HepG2 (cell line): ENCODE measurements at regions of chr7 and their contacts with region 1.

Region 1: DNA sequence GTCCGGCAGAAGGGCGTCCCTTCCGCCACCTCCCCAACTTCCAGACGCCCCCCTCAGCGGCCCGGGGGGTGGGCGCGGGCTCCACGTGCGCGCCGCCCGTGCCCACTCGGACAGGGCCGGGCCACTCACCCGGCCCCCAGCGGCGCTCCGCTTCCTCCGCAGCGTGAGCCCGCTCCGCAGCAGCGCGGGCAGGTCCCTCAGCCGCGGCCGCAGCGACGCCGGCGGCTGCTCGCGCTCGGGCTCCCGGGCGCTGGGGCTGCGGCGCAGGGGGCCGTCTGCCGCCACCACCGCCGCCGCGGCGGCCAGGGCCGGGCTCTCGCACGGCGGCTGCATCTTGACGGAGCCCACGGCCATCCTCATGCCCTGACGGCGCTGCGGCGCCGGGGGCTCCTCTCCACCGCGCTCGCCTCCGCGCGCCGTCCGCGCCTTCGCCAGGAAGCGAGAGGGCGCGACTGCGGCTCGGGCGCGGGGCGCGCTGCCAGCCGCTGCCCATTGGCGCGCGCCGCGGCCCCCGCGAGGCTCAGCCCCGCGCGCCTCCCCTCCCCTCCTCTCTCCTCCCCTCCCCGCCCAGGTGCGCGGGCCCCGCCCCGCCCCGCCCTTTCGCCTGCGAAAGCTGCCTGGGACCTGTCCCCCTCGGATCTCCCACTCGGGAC is at the start of gene RAPGEF5:
- DNase-seq: no peak
- ATAC-seq: peak; percentile 44
- H3K4me3 ChIP-seq: peak within 1 kb of the TSS; percentile 85 to 93 (median 88)
- H3K27ac ChIP-seq: peak within 1 kb of the TSS; percentile 95
- H3K4me1 ChIP-seq: peaks cover 85% of the 10 kb centered on the region
- H3K27me3 ChIP-seq: peaks cover 0 to 3% of the 10 kb centered on the region in 2 experiments; a peak in 1 of 5 replicates
- CTCF ChIP-seq: no peak
- EP300 ChIP-seq: no peak
- POLR2A ChIP-seq: peak in 1 of 2 experiments; percentile 54; a peak in 2 of 4 replicates
- RAD21 ChIP-seq: peak; percentile 43; the same call in 1 of the 2 replicates
- total RNA-seq, gene RAPGEF5: 14.2 and 23.4 TPM in 2 replicates

Region 2: GRCh38 chr7:22339725-22340390 is 17.0 kb before region 1 on chr7:
- CTCF ChIA-PET with region 1: no interaction called
- POLR2A ChIA-PET with region 1: interaction called, 17 read pairs
- in situ Hi-C with region 1: no loop called
- intact Hi-C with region 1: no loop called
- DNase-seq: no peak
- ATAC-seq: no peak
- H3K4me3 ChIP-seq: no peak overlapping the region
- H3K27ac ChIP-seq: no peak overlapping the region
- H3K4me1 ChIP-seq: peaks cover 93% of the 10 kb centered on the region
- H3K27me3 ChIP-seq: no peaks in the 10 kb centered on the region
- CTCF ChIP-seq: no peak
- EP300 ChIP-seq: no peak
- POLR2A ChIP-seq: no peak
- RAD21 ChIP-seq: no peak

Region 3: DNA sequence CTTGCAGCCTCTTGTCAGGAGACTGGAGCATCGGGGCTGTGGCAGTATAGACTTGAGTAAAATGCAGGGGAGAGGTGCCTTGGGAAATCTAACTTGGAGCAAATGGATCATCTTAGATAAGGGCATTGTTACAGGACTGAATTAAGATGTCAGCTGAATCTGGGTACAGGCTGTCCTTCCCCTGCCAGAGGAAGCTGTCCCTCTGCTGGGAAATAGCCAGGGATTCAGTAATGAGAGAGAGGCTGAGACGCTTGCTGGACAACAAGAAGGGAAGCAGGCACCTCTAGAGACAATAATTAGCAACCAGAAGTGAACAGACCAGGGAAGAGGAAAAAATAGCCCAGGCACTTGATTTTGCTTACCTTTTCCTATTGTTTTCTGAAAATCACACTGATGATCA is 20.9 kb after region 1 on chr7:
- CTCF ChIA-PET with region 1: no interaction called
- POLR2A ChIA-PET with region 1: interaction called, 26 read pairs
- in situ Hi-C with region 1: no loop called
- intact Hi-C with region 1: loop called (anchors 1 kb)
- DNase-seq: no peak
- ATAC-seq: peak; percentile 47
- H3K4me3 ChIP-seq: peak overlapping the region in 1 of 3 experiments; percentile 46; a peak in 1 of 6 replicates
- H3K27ac ChIP-seq: peak overlapping the region; percentile 81
- H3K4me1 ChIP-seq: peaks cover 59% of the 10 kb centered on the region
- H3K27me3 ChIP-seq: no peaks in the 10 kb centered on the region
- CTCF ChIP-seq: no peak
- EP300 ChIP-seq: no peak
- POLR2A ChIP-seq: no peak
- RAD21 ChIP-seq: no peak

Region 4: GRCh38 chr7:23168111-23168885 is 811.5 kb after region 1 on chr7:
- CTCF ChIA-PET with region 1: no interaction called
- POLR2A ChIA-PET with region 1: no interaction called
- in situ Hi-C with region 1: no loop called
- intact Hi-C with region 1: no loop called
- DNase-seq: no peak
- ATAC-seq: no peak
- H3K4me3 ChIP-seq: no peak overlapping the region
- H3K27ac ChIP-seq: no peak overlapping the region
- H3K4me1 ChIP-seq: no peaks in the 10 kb centered on the region
- H3K27me3 ChIP-seq: no peaks in the 10 kb centered on the region
- CTCF ChIP-seq: no peak
- EP300 ChIP-seq: no peak
- POLR2A ChIP-seq: no peak
- RAD21 ChIP-seq: no peak